Heart right ventricle (tissue), 16 donors: ENCODE measurements at regions of chr18 and their contacts with region 1.

Region 1: GRCh38 chr18:9449600-9450414 is 25.5 kb upstream of the RALBP1 start:
- DNase-seq: no peak
- ATAC-seq: no peak
- H3K4me3 ChIP-seq: no peak overlapping the region
- H3K27ac ChIP-seq: no peak overlapping the region
- H3K4me1 ChIP-seq: peaks cover 0 to 6% (median 0%) of the 10 kb centered on the region in 9 donors
- H3K27me3 ChIP-seq: peaks cover 0 to 7% (median 0%) of the 10 kb centered on the region in 7 donors
- CTCF ChIP-seq: no peak

Region 2: DNA sequence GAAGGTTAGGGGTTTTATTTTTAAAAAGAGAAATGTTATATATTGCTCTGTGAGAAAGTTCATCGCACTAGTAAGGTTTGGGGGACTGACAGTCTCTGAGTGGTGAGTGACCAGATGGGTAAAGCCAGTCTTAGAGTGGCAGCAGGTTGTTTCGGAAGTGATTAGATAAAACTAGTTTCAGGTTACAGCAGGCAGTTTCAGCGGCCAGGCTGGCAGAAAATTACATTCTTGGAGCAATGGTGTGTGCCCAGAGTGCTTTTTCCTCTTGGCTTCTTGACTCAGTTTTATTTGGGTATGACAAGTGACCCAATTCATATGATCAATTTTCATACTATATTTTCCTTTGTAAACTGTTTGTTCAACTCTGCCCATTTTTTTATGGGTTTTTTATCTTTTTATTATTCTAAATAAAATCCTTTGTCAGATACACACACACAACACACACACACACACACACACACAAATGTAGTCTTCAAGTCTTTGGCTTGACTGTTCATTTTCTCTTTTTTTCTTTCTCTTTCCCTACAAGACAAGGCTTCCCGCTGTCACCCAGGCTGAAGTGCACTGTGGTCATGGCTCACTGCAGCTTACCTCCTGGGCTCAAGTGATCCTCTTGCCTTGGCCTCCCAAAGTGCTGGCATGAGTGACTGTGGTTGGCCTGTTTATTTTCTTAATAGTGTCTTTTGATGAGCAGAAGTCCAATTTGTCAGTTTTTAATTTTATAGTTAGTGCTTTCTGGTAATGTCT is 56.4 kb after region 1 on chr18:
- intact Hi-C with region 1: loop called in 1 of 10 experiments (anchors 10 kb)
- DNase-seq: peak in 1 of 2 donors; percentile 14
- ATAC-seq: peak in 7 of 8 donors; percentile 38 to 79 (median 70)
- H3K4me3 ChIP-seq: no peak overlapping the region
- H3K27ac ChIP-seq: peak overlapping the region in 1 of 10 donors; percentile 16
- H3K4me1 ChIP-seq: peaks cover 0 to 31% (median 8%) of the 10 kb centered on the region in 9 donors
- H3K27me3 ChIP-seq: no peaks in the 10 kb centered on the region
- CTCF ChIP-seq: no peak